K562 (cell line): ENCODE measurements at regions of chr17 and their contacts with region 1.

Region 1: DNA sequence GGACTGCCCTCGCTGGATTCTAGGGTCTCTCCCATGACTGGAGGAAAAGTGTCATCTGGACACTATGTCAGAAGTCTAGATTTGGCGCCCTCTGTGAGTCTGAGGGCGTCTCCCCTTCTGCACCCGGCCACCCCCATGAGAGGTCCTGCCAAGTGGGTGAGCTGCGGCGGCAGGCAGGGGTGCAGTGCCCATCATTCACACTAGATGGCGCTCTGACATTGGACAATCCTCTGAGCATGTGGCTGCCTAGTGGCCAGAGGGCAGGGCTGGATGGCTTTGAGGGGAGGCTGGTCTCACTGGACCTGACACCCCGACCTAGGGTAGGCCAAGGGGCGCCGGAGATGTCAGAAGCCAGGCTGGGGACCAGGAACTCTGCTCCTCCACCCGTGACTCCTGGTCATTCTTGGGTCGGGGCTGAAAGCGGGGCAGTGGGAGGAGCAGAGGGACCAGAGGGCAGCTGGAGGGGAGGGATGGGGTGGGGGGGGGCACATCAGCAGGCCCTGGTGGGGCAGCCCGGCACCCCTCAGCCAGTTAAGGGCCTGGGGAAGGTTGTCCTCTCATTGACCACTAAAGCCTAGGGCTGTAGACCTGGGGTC is 28.0 kb downstream of the MRM1 start:
- DNase-seq: peak; percentile 79 to 91 (median 88)
- ATAC-seq: peak; percentile 96
- H3K4me3 ChIP-seq: no peak overlapping the region
- H3K27ac ChIP-seq: no peak overlapping the region
- H3K4me1 ChIP-seq: peaks cover 0 to 9% of the 10 kb centered on the region in 2 experiments; a peak in 2 of 5 replicates
- H3K27me3 ChIP-seq: peaks cover 21 to 34% of the 10 kb centered on the region in 2 experiments
- CTCF ChIP-seq: peak; percentile 97 to 98 (median 98)
- EP300 ChIP-seq: no peak
- POLR2A ChIP-seq: no peak
- RAD21 ChIP-seq: peak; percentile 81 to 95

Region 2: DNA sequence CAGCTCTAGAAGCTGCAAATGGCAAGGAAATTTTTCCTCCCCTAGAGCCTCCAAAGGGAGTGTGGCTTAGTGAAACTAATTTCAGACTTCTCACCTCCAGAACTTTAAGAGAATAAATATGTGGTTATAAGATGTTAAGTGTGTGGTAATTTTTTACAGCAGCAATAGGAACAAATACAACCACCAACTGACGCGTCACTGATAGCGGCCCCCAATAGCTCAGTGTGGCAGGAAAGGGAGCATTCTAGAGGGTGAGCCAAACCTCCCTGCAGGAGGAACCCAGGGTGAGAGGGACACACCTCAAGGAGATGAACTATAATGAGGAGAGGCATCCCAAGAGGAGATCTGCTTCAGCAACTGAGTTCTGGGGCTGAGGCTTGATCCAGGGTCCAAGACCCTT is 521.7 kb before region 1 on chr17:
- CTCF ChIA-PET with region 1: no interaction called
- POLR2A ChIA-PET with region 1: no interaction called
- in situ Hi-C with region 1: no loop called
- intact Hi-C with region 1: no loop called
- DNase-seq: no peak
- ATAC-seq: no peak
- H3K4me3 ChIP-seq: no peak overlapping the region
- H3K27ac ChIP-seq: no peak overlapping the region
- H3K4me1 ChIP-seq: no peaks in the 10 kb centered on the region
- H3K27me3 ChIP-seq: no peaks in the 10 kb centered on the region
- CTCF ChIP-seq: no peak
- EP300 ChIP-seq: no peak
- POLR2A ChIP-seq: no peak
- RAD21 ChIP-seq: no peak

Region 3: GRCh38 chr17:36198831-36199465 is 430.4 kb before region 1 on chr17:
- CTCF ChIA-PET with region 1: no interaction called
- POLR2A ChIA-PET with region 1: no interaction called
- in situ Hi-C with region 1: no loop called
- intact Hi-C with region 1: no loop called
- DNase-seq: no peak
- ATAC-seq: no peak
- H3K4me3 ChIP-seq: no peak overlapping the region
- H3K27ac ChIP-seq: no peak overlapping the region
- H3K4me1 ChIP-seq: no peaks in the 10 kb centered on the region; a peak in 2 of 5 replicates
- H3K27me3 ChIP-seq: peaks cover 10 to 27% of the 10 kb centered on the region in 2 experiments; a peak in 4 of 5 replicates
- CTCF ChIP-seq: no peak
- EP300 ChIP-seq: no peak
- POLR2A ChIP-seq: no peak
- RAD21 ChIP-seq: no peak

Region 4: DNA sequence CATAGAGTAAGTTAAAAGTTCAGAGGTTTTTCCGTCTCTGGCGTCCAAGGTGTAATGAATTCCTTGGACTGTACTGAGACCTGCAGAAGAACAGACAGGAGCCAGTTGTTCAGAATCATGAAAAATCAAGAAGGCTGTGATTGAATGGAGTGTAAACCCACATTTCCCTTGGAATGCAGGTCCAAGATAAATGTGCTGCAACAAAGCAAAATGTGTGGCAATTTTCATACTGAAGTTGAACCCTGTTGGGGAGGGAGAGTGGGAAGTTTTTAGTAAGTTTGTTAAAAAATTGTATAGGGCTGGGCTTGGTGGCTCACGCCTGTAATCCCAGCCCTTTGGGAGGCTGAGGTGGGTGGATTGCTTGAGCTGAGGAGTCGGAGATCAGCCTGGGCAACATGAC is 63.3 kb before region 1 on chr17:
- CTCF ChIA-PET with region 1: no interaction called
- POLR2A ChIA-PET with region 1: no interaction called
- in situ Hi-C with region 1: no loop called
- intact Hi-C with region 1: no loop called
- DNase-seq: no peak
- ATAC-seq: no peak
- H3K4me3 ChIP-seq: no peak overlapping the region
- H3K27ac ChIP-seq: no peak overlapping the region
- H3K4me1 ChIP-seq: no peaks in the 10 kb centered on the region
- H3K27me3 ChIP-seq: no peaks in the 10 kb centered on the region
- CTCF ChIP-seq: no peak
- EP300 ChIP-seq: no peak
- POLR2A ChIP-seq: no peak
- RAD21 ChIP-seq: no peak

Region 5: DNA sequence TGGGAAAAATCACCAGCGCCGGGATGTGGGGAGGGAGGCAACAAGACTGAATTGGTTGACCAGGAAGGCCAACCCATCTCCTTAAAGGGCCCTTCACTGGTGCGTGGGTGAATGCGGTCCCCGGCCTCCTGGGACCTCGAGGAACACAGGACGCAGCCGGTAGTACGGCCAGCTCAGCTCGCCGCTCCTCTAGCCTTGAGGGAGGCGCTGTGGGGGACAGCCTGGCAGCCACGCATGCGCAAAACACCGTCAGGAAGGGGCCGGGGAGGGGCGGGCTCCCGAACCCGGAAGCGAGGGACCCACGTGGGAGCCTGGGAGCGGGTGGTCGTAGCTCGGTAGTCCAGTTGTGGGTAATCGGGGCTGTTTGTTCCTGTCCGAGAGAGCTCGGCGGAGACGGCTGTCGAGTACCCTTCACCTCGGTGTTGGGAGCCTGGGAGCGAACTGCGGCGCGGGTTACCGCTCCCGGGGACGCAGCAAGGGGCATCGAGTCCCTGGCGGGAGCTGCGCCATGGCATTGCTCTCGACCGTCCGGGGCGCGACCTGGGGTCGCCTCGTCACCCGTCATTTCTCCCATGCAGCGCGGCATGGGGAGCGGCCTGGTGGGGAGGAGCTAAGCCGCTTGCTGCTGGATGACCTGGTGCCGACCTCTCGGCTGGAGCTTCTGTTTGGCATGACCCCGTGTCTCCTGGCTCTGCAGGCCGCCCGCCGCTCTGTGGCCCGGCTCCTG is 27.9 kb before region 1 on chr17 and contains the start of gene MRM1:
- CTCF ChIA-PET with region 1: interaction called, 5 read pairs
- POLR2A ChIA-PET with region 1: interaction called, 3 read pairs
- in situ Hi-C with region 1: no loop called
- intact Hi-C with region 1: loop called (anchors 2 kb)
- DNase-seq: peak; percentile 94 to 97 (median 94)
- ATAC-seq: peak; percentile 85
- H3K4me3 ChIP-seq: peak within 1 kb of the TSS; percentile 82
- H3K27ac ChIP-seq: peak within 1 kb of the TSS; percentile 98
- H3K4me1 ChIP-seq: peaks cover 57 to 66% of the 10 kb centered on the region in 2 experiments
- H3K27me3 ChIP-seq: no peaks in the 10 kb centered on the region
- CTCF ChIP-seq: peak; percentile 22 to 34 (median 30); a peak in 3 of 6 replicates
- EP300 ChIP-seq: no peak; the same call in 1 of the 2 replicates
- POLR2A ChIP-seq: peak; percentile 87
- RAD21 ChIP-seq: no peak
- polyA plus RNA-seq, gene MRM1: 0.61 to 1.4 TPM

Region 6: DNA sequence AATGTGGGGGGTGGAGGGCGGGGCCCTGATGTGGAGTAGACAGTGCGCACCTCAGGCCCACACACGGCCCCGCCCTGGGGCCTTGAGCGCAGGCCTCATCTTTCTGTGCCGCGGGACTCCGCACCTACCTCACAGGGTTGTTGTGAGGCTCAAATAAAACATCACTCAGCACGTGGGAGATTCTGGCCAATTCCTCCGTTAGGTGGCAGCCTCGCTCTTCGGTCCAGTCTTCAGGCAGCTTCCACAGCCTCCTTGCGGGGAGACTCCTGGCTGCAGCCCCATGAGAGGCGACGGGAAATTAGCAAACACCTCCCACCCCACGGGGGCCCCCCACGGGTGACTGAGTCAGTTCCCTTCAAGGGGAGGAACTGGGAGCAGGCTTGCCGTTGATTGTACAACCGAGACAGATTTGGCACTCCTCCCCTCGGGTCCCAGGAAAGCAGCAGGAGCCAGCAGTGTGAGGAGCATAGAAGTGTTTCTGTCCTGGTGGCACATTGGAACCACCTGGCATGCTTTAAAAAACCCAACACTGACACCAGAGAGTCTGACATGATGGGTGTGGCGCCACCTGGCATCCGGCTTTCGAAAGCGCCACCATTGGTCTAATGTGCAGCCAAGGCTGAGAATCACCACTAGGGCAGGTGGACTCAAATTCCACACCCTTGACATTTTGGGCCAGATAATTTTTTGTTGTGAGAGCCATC is 20.4 kb before region 1 on chr17:
- CTCF ChIA-PET with region 1: interaction called, 10 read pairs
- POLR2A ChIA-PET with region 1: interaction called, 3 read pairs
- in situ Hi-C with region 1: no loop called
- intact Hi-C with region 1: no loop called
- DNase-seq: peak; percentile 72 to 89 (median 74)
- ATAC-seq: peak; percentile 88
- H3K4me3 ChIP-seq: no peak overlapping the region
- H3K27ac ChIP-seq: no peak overlapping the region
- H3K4me1 ChIP-seq: peaks cover 32 to 42% of the 10 kb centered on the region in 2 experiments; a peak in 4 of 5 replicates
- H3K27me3 ChIP-seq: no peaks in the 10 kb centered on the region
- CTCF ChIP-seq: peak; percentile 82 to 98 (median 90)
- EP300 ChIP-seq: no peak
- POLR2A ChIP-seq: 0 out of 2 replicates have a peak, but pooled peaks have one; percentile 8
- RAD21 ChIP-seq: peak; percentile 35 to 71

Region 7: GRCh38 chr17:36755586-36755985 is 126.2 kb after region 1 on chr17:
- CTCF ChIA-PET with region 1: interaction called, 4 read pairs
- POLR2A ChIA-PET with region 1: no interaction called
- in situ Hi-C with region 1: no loop called
- intact Hi-C with region 1: loop called (anchors 5 kb)
- DNase-seq: peak; percentile 55 to 70 (median 62)
- ATAC-seq: peak; percentile 91
- H3K4me3 ChIP-seq: no peak overlapping the region
- H3K27ac ChIP-seq: no peak overlapping the region
- H3K4me1 ChIP-seq: no peaks in the 10 kb centered on the region; a peak in 1 of 5 replicates
- H3K27me3 ChIP-seq: peaks cover 13 to 25% of the 10 kb centered on the region in 2 experiments
- CTCF ChIP-seq: peak; percentile 74 to 77 (median 75)
- EP300 ChIP-seq: no peak
- POLR2A ChIP-seq: no peak
- RAD21 ChIP-seq: peak; percentile 47 to 87

Region 8: GRCh38 chr17:37047631-37048104 is 418.3 kb after region 1 on chr17:
- CTCF ChIA-PET with region 1: interaction called, 26 read pairs
- POLR2A ChIA-PET with region 1: interaction called, 3 read pairs
- in situ Hi-C with region 1: loop called (anchors 5 kb)
- intact Hi-C with region 1: loop called (anchors 5 kb)
- DNase-seq: peak; percentile 75 to 91 (median 80)
- ATAC-seq: peak; percentile 98
- H3K4me3 ChIP-seq: no peak overlapping the region
- H3K27ac ChIP-seq: no peak overlapping the region
- H3K4me1 ChIP-seq: peaks cover 0 to 6% of the 10 kb centered on the region in 2 experiments; a peak in 1 of 5 replicates
- H3K27me3 ChIP-seq: no peaks in the 10 kb centered on the region
- CTCF ChIP-seq: peak; percentile 85 to 93 (median 91)
- EP300 ChIP-seq: no peak
- POLR2A ChIP-seq: no peak
- RAD21 ChIP-seq: peak; percentile 82 to 92

Region 9: DNA sequence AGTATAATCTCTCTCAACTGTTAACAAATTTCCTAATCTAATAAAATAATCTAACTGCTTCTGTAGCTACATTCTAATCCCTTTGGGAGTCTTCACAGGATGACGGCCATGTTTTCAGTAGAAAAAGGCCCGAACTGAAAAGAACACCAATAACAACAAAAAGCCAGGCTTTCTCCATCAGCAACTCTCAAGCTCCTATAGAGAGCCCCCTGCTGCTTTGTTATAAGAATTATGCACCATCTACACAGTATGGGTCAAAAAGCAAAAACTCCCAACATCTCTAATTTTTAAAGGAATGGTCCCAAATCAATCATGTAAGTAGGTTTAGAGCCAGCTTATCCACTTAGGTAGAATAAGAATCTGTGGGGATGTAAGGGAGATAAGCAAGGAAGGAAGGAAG is 582.8 kb after region 1 on chr17:
- CTCF ChIA-PET with region 1: no interaction called
- POLR2A ChIA-PET with region 1: no interaction called
- in situ Hi-C with region 1: no loop called
- intact Hi-C with region 1: loop called (anchors 10 kb)
- DNase-seq: no peak
- ATAC-seq: peak; percentile 51; the same call in 2 of the 3 replicates
- H3K4me3 ChIP-seq: no peak overlapping the region
- H3K27ac ChIP-seq: no peak overlapping the region
- H3K4me1 ChIP-seq: peaks cover 0 to 10% of the 10 kb centered on the region in 2 experiments; a peak in 3 of 5 replicates
- H3K27me3 ChIP-seq: no peaks in the 10 kb centered on the region
- CTCF ChIP-seq: 0 out of 6 replicates have a peak, but pooled peaks of 1 of the 3 experiments have one; percentile 13
- EP300 ChIP-seq: no peak
- POLR2A ChIP-seq: no peak
- RAD21 ChIP-seq: no peak

Region 10: GRCh38 chr17:37373530-37374159 is 744.3 kb after region 1 on chr17:
- CTCF ChIA-PET with region 1: interaction called, 7 read pairs
- POLR2A ChIA-PET with region 1: no interaction called
- in situ Hi-C with region 1: loop called (anchors 10 kb)
- intact Hi-C with region 1: no loop called
- DNase-seq: peak; percentile 66 to 90 (median 74)
- ATAC-seq: peak; percentile 97
- H3K4me3 ChIP-seq: no peak overlapping the region
- H3K27ac ChIP-seq: no peak overlapping the region
- H3K4me1 ChIP-seq: peaks cover 0 to 2% of the 10 kb centered on the region in 2 experiments; a peak in 2 of 5 replicates
- H3K27me3 ChIP-seq: no peaks in the 10 kb centered on the region
- CTCF ChIP-seq: peak; percentile 99 to 100 (median 100)
- EP300 ChIP-seq: no peak
- POLR2A ChIP-seq: no peak
- RAD21 ChIP-seq: peak; percentile 93 to 99